ENCODE measurements at regions of chr1 and their contacts with region 1.

Region 1: DNA sequence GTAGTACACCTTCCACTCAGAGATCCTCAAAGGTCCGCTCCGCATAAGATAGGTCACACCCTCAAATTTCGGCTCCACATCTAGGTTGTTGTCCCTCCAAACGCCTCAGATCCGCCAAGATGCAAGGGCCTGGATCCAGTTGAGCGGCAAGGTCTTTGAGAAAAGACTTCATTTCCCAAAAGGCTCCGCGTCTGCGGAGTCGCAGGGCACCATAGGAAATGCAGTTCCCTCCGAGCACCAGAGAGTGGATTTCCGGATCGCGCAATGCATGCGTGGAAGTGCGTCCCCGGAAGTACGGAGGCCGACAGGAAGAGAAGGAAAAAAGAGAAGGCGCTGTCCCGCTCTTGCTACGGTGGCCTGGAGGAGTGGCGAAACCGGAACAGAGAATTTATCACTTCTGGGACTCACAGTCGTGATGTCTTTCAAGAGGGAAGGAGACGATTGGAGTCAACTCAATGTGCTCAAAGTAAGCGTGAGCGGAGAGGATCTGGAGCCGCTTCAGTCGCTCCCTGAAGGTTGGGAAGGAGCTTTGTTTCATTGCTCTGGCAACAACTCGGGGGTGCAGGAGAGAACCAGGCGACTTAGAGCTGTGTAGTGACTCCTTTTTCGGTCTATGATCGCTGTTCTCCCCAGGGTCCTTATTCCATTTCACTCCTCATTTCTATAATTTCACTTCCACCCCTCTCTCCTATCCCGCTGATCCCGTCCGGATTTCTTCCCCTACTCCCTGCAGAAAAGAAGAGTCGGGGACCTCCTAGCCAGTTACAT is at the starts of genes LYSMD1 and SCNM1:
- DNase-seq: peak; percentile 99
- H3K4me3 ChIP-seq: peak within 1 kb of the TSS; percentile 69 to 86 (median 75)
- H3K27ac ChIP-seq: peak within 1 kb of the TSS; percentile 85
- H3K4me1 ChIP-seq: peaks cover 16% of the 10 kb centered on the region
- H3K27me3 ChIP-seq: no peaks in the 10 kb centered on the region
- CTCF ChIP-seq: peak in 1 of 2 donors; percentile 0
- total RNA-seq, gene LYSMD1: 7.3 to 9.7 TPM
- total RNA-seq, gene SCNM1: 24.8 to 47.6 TPM

Region 2: DNA sequence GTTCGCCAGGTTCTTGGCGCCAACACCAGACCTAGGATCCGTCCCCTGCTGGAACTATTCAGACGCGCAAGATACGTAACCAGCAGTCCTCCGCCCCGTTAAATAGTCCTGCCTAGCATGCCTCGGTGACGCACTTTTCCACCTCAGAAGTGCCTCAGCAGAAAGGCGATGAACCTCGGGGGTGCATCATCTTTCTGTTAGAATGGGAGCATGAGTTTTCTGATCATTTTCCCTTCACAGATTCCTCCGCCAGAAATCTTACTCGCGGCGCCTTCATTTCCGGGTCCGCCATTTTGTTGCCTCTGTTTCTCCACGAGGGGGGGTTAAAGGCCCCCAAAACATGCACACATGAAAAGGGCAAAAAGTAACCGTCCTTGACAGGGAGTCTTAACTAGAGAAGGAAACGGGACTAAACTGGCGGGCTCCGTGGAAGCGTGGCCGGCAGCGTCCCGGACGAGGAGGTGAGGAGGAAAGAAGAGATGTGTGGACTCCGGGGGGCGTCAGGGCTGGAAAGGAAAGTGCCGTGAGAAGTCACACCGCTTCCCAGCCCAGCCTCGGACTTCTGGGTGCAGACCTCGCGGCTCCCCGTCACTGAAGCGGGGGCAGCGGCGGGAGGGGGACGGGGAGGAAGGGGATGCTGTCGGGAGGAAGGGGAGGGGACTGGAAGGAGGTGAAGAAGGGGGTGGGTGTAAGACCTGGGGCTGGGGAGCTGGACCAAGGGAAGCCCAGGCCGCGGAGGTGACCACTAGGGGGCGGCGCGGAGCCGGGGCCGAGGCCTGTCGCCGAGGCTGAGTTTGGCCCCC is 95.2 kb before region 1 on chr1 and contains the start of gene GABPB2:
- CTCF ChIA-PET with region 1: interaction called, 3 read pairs
- dilution Hi-C with region 1: no loop called
- in situ Hi-C with region 1: no loop called
- intact Hi-C with region 1: loop called (anchors 2 kb)
- DNase-seq: peak; percentile 93
- H3K4me3 ChIP-seq: peak within 1 kb of the TSS; percentile 76 to 95 (median 84)
- H3K27ac ChIP-seq: peak within 1 kb of the TSS; percentile 91
- H3K4me1 ChIP-seq: peaks cover 12% of the 10 kb centered on the region
- H3K27me3 ChIP-seq: no peaks in the 10 kb centered on the region
- CTCF ChIP-seq: peak; percentile 62 to 94
- total RNA-seq, gene GABPB2: 9.2 to 10.7 TPM

Region 3: GRCh38 chr1:151189638-151190445 is 23.9 kb after region 1 on chr1 and contains the start of gene VPS72:
- CTCF ChIA-PET with region 1: no interaction called
- dilution Hi-C with region 1: no loop called
- in situ Hi-C with region 1: no loop called
- intact Hi-C with region 1: loop called (anchors 1 kb)
- DNase-seq: peak; percentile 88
- H3K4me3 ChIP-seq: peak within 1 kb of the TSS; percentile 83 to 92 (median 92)
- H3K27ac ChIP-seq: peak within 1 kb of the TSS; percentile 84
- H3K4me1 ChIP-seq: peaks cover 19% of the 10 kb centered on the region
- H3K27me3 ChIP-seq: no peaks in the 10 kb centered on the region
- CTCF ChIP-seq: no peak
- total RNA-seq, gene VPS72: 34.3 to 71.3 TPM

Region 4: DNA sequence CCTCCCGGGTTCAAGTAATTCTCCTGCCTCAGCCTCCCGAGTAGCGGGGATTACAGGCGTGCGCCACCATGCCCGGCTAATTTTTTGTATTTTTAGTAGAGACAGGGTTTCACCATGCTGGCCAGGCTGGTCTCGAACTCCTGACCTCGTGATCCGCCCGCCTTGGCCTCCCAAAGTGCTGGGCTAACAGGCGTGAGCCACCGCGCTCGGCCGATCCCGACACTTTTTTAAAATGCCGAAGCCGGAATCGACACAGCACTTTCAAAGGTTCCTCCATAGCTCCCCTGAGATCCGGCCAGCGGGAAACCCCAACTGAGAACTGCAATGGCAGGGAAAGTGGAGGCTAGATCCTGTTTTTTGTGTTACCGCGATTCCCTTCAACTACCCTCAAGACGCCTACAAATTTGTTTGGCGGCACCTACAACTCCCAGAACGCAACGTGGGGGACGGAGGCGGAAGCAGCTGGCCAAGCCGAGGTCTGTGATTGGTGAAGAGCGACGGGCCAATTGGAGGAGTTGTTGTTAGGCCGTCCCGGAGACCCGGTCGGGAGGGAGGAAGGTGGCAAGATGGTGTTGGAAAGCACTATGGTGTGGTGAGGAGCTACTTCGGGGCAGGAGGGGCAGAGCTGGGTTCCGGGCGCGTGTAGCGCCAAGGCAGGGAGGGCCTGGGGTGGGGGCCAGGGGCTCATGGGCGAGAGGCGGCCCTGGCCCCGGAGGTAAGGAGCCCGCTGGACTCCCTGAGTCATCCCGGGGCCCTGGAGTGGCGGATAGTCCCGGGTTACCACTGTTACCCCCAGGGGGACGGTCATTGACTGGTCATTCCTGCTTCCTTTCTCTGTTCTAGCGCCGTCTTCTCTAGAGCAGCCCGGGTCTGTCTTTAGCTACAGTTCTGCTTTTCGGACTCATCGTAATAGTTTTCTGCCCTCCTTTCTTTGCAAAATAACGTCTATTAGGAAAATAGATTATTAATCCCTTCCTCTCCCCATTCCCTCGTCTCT is 88.6 kb after region 1 on chr1 and contains the start of gene PSMD4:
- CTCF ChIA-PET with region 1: no interaction called
- dilution Hi-C with region 1: no loop called
- in situ Hi-C with region 1: no loop called
- intact Hi-C with region 1: loop called (anchors 2 kb)
- DNase-seq: peak; percentile 97
- H3K4me3 ChIP-seq: peak within 1 kb of the TSS; percentile 60 to 75 (median 72)
- H3K27ac ChIP-seq: peak within 1 kb of the TSS; percentile 70
- H3K4me1 ChIP-seq: peaks cover 9% of the 10 kb centered on the region
- H3K27me3 ChIP-seq: no peaks in the 10 kb centered on the region
- CTCF ChIP-seq: no peak
- total RNA-seq, gene PSMD4: 94.7 to 167 TPM

Region 5: GRCh38 chr1:151273925-151274466 is 108.1 kb after region 1 on chr1:
- CTCF ChIA-PET with region 1: no interaction called
- dilution Hi-C with region 1: loop called (anchors 5 kb)
- in situ Hi-C with region 1: no loop called
- intact Hi-C with region 1: no loop called
- DNase-seq: no peak
- H3K4me3 ChIP-seq: no peak overlapping the region
- H3K27ac ChIP-seq: no peak overlapping the region
- H3K4me1 ChIP-seq: no peaks in the 10 kb centered on the region
- H3K27me3 ChIP-seq: no peaks in the 10 kb centered on the region
- CTCF ChIP-seq: no peak

Measured in mammary epithelial cell (primary cell).